CD4-positive, alpha-beta T cell (primary cell): ENCODE measurements at regions of chr1 and their contacts with region 1.

Region 1: DNA sequence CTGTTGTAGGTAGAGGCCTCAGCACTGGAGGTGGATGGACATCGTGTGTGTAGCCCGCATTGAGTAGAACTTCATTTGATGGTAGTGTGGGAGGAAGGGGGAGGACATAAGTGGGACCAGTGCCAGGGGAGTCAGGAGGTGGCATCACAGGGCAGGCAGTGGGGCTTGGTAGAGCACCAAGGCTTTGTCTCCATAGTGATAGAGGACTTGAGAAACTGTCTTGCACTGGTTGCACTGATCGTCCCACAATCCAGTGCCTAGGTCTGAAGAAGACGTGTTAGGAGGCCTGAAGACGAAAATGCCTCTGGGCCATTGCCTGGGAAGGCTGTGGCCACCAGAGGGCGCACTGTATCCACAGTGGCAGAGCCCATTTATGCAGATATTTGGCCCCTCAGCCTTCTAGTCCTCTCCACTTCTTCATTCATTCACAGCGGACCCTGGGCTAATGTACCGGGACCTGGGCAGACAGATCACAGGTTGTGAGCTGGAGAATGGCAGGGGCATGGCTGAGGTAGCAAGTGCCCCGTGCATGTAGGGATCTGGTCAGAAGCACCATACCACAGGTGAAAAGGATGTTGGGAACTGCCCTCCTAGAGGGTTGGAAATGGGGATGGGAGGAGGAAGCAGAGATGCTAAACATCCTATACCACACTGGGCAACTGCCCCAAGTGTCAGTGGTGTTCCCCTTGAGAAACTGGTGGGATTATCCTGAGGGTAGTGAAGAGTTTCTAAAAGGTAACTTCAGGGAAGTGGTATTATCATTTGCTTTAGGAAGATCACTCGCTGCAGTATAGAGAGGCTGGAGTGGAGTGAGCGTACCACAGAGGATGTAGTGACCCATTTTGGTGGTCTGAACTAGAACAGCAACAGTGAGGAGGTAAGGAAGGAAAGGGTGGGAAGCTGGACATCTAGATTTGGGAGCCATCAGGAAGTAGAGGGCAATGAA is 95.3 kb downstream of the PIK3R3 start:
- DNase-seq: peak; percentile 71 to 91 (median 83)
- ATAC-seq: peak; percentile 75
- H3K4me3 ChIP-seq: no peak overlapping the region
- H3K4me3 Mint-ChIP-seq: no peak overlapping the region
- H3K27ac ChIP-seq: no peak overlapping the region
- H3K27ac Mint-ChIP-seq: no peak overlapping the region
- H3K4me1 ChIP-seq: peaks cover 6% of the 10 kb centered on the region
- H3K4me1 Mint-ChIP-seq: no peaks in the 10 kb centered on the region
- H3K27me3 ChIP-seq: no peaks in the 10 kb centered on the region
- H3K27me3 Mint-ChIP-seq: no peaks in the 10 kb centered on the region
- CTCF ChIP-seq: peak; percentile 99

Region 2: DNA sequence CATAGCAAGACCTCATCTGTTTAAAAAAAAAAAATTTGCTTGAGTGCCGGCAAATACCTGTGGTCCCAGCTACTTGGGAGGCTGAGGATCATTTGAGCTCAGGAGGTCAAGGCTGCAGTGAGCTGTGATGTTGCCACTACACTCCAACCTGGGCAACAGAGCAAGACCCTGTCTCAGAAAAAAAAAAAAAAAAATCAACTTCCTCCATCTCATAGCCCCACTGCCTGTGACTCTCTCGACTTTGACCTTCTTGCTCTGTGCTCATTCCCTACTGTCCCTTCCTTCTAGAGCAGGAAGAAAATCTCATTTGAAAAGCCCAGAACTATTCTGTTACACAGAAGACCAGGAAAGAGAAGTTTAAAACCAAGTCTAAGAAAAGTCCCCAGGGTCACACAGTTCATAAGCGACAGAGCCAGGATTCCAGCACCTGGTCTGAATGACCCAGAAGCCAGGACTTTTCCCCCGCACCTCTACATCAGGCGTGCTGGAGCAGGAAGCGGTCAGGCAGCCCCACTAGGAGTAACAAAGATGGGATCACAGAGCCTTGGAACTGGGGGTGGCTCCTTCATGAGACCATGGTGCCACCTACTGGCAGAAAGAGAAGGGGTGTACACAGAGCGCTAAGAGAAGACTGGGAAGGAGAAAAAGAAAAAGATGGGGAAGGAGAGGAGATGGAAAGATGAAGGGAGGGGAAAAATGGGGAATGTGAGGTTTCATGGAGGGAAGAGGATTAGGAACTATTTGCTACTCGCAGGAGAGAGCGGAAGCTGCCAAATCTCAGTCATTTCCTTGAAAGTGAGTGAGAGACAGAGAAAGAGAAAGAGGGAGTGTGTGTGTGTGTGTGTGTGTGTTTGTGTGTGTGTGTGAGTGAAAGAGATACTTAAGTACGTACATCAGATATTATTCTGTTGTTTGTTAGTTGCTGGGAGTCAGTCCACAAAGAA is 142.2 kb after region 1 on chr1:
- CTCF ChIA-PET with region 1: no interaction called
- POLR2A ChIA-PET with region 1: no interaction called
- intact Hi-C with region 1: loop called (anchors 1 kb)
- DNase-seq: peak; percentile 47 to 83 (median 58)
- ATAC-seq: peak; percentile 81
- H3K4me3 ChIP-seq: no peak overlapping the region
- H3K4me3 Mint-ChIP-seq: no peak overlapping the region
- H3K27ac ChIP-seq: no peak overlapping the region
- H3K27ac Mint-ChIP-seq: no peak overlapping the region
- H3K4me1 ChIP-seq: peaks cover 7% of the 10 kb centered on the region
- H3K4me1 Mint-ChIP-seq: no peaks in the 10 kb centered on the region
- H3K27me3 ChIP-seq: peaks cover 0 to 3% of the 10 kb centered on the region in 2 experiments
- H3K27me3 Mint-ChIP-seq: no peaks in the 10 kb centered on the region
- CTCF ChIP-seq: peak; percentile 93